ENCODE measurements at regions of chr1 and their contacts with region 1.

Region 1: GRCh38 chr1:210400043-210400840 is 71.5 kb downstream of the HHAT start:
- DNase-seq: no peak
- ATAC-seq: peak; percentile 94

Region 2: DNA sequence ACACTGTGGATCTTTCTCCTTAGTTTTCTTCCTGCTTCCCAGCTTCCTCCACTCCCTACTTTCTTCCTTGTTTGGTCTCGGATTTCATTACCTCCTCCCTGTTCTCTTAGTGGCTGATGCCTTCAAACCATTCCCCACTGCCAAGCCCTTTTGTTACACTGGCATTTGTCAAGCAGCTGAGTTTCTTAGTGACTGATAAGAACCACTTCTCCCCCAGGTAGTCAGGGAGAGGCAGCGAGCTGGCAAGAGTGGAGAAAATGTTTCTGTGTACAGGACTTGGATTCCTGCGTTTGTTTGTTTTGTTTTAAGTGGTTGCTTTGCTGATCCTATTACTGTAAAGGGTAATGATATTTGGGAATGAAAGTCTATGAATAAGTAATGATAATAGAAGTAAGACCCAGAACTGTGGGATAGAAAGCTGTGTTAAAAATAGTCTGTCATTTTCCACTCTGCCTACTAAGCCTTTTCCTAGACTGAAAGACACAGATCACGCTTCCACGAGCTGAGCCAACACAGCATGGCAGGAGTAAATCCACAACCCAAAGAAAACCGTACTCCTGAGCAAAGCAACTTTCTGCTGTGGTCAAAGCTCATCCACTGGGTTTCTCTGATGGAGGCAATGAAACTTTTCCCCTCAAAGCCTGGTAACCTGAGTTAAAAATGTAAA is 177.8 kb before region 1 on chr1:
- intact Hi-C with region 1: no loop called
- DNase-seq: no peak
- ATAC-seq: no peak

Region 3: DNA sequence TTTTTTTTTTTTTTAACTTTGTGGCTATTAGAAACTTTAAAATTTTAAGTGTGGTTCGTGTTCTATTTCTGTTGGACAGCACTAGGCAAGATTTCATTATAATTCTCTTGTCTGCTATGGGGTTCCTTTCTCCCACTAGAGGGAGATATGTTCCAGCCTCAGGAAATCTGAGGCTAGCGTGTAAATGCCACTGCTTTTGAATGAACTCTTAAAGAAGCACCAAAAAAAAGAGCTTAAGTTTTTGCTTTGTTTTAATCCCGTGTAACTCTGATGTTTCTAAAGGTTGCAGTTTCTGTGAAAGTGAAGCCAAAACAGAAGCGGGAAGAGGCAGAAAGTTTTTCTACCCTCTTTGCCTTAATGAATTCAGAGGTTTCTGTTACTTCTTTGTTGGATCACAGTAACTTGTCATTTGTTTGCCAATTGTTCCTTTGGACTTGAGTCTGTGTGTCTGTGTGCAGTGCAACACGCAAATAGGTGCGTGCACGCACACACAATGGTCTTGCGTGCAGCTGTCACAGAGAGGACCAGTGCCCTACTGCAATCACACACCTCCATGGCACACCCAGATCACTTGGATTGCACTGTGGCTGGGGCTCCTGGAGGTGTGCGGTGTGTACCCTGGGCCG is 39.3 kb before region 1 on chr1:
- intact Hi-C with region 1: loop called (anchors 1 kb)
- DNase-seq: no peak
- ATAC-seq: no peak

Region 4: GRCh38 chr1:210607361-210607760 is 207.1 kb after region 1 on chr1:
- intact Hi-C with region 1: no loop called
- DNase-seq: no peak
- ATAC-seq: no peak

Measured in Right ventricle myocardium inferior (tissue), 1 donor.